Activated naive CD4-positive, alpha-beta T cell treated with anti-CD3 and anti-CD28 coated beads, Interleukin-2, amount 10 ng/mL, durations not matched to agents 7 days and 5 days (primary cell): ENCODE measurements at regions of chr13 and their contacts with region 1.

Region 1: GRCh38 chr13:52128714-52129700 is at the start of gene NEK5:
- DNase-seq: peak; percentile 72
- H3K4me3 Mint-ChIP-seq: peak within 1 kb of the TSS; percentile 75
- H3K27ac Mint-ChIP-seq: no peak within 1 kb of the TSS
- H3K4me1 Mint-ChIP-seq: peaks cover 23% of the 10 kb centered on the region
- H3K27me3 Mint-ChIP-seq: peaks cover 25% of the 10 kb centered on the region

Region 2: GRCh38 chr13:51895906-51896888 is 232.8 kb before region 1 on chr13:
- CTCF ChIA-PET with region 1: interaction called, 34 read pairs
- DNase-seq: peak; percentile 74
- H3K4me3 Mint-ChIP-seq: no peak overlapping the region
- H3K27ac Mint-ChIP-seq: no peak overlapping the region
- H3K4me1 Mint-ChIP-seq: peaks cover 4% of the 10 kb centered on the region
- H3K27me3 Mint-ChIP-seq: peaks cover 35% of the 10 kb centered on the region

Region 3: GRCh38 chr13:52001120-52001731 is 127.8 kb before region 1 on chr13:
- CTCF ChIA-PET with region 1: interaction called, 37 read pairs
- DNase-seq: no peak
- H3K4me3 Mint-ChIP-seq: no peak overlapping the region
- H3K27ac Mint-ChIP-seq: no peak overlapping the region
- H3K4me1 Mint-ChIP-seq: peaks cover 3% of the 10 kb centered on the region
- H3K27me3 Mint-ChIP-seq: peaks cover 29% of the 10 kb centered on the region

Region 4: DNA sequence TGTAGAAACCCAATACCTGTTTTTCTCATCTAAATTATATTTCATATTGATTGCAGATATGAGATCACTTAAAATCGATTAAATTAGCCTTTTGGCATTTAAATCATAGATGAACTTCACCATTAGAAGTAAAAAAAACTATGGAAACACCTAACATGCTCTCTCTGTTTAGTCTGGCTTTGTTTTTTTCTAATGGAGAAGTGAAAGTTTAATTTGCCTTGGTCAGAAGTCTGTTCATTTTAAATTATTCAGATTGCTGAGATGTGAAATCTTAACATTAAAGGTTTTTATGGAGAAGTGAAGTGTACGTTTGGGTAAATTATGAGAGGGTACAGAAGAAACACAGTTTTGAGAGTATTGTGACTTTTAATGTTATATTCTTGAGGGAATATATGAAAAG is 530.3 kb after region 1 on chr13:
- CTCF ChIA-PET with region 1: no interaction called
- DNase-seq: no peak
- H3K4me3 Mint-ChIP-seq: no peak overlapping the region
- H3K27ac Mint-ChIP-seq: peak overlapping the region; percentile 35
- H3K4me1 Mint-ChIP-seq: no peaks in the 10 kb centered on the region
- H3K27me3 Mint-ChIP-seq: no peaks in the 10 kb centered on the region